ENCODE measurements at regions of chr2 and their contacts with region 1.

Region 1: DNA sequence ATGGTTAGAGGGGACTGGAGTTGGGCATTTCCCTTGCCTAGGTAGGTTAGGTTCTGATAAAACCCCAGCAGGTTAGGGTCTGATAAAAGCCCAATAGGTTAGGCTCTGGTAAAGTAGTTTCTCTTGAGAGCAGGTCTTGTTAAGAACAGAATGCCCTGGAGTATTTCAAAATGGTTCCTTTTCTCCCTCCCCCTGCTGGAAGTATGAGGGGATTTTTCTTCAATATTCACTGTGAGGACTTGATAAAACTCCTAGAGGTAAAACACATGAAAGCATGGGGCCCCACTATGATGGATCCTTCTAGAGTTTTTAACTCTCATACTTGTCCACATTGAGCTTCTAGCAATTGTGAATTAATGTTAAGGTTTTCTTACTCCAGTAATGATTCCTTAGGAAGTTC is 27.6 kb downstream of the ANKAR start:
- DNase-seq: no peak
- ATAC-seq: no peak
- H3K4me3 ChIP-seq: no peak overlapping the region
- H3K27ac ChIP-seq: no peak overlapping the region
- H3K4me1 ChIP-seq: no peaks in the 10 kb centered on the region
- H3K27me3 ChIP-seq: no peaks in the 10 kb centered on the region
- CTCF ChIP-seq: no peak

Region 2: DNA sequence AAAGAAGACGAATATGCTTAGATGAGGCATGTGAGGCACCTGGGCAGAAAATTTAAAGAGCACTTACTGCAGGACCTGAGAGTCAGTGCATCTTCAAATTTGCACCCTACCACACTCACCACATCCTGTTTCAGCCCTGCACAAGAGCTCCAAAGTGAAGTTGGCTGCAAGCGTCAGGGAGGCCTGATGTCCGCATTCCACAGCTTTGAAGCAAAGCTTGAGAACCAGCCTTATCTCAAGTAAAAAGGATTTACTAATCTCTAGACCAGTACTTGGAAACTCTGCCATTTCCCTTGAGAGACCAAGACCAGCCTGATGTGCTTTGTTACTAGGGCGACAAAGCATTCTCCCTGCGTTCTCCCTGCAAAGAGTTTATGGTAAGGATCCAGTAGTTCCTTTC is 44.2 kb before region 1 on chr2:
- intact Hi-C with region 1: loop called (anchors 5 kb)
- DNase-seq: peak; percentile 61
- ATAC-seq: peak; percentile 66
- H3K4me3 ChIP-seq: no peak overlapping the region
- H3K27ac ChIP-seq: peak overlapping the region; percentile 82
- H3K4me1 ChIP-seq: peaks cover 19% of the 10 kb centered on the region
- H3K27me3 ChIP-seq: no peaks in the 10 kb centered on the region
- CTCF ChIP-seq: no peak

Region 3: DNA sequence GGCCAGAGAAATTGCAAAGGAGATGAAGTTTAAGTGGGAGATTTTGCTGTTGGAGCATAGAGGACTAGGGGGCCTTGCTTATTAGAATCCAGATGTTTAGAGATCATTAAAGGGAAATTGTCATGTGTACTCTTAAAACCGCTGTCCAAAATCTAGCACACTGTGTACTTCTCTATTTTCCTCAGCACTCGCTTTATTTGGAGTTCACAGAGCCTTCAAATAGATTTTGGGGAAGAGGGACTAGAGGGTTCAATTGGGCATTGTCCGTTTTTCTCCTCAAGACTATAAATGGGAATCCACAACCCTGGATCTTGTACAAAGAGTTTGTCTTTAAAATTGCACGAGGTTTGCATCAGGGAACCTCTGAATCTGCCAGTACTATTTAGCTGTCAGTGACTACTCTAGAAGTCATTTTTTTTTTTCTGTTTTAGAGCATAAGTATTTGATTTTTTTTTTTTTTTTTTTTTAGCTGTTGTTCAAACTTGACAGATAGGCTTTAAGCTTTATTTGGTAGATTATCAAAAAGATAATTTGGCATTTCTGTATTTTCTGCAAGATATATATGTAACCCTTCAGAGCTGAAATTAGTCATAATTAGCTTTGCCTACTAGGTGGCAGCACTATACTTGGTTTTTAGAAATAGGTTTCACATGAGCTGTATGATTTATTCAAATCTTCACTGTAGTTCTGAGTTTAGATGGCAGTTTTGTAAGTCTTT is 96.4 kb after region 1 on chr2:
- intact Hi-C with region 1: no loop called
- DNase-seq: no peak
- ATAC-seq: peak; percentile 61
- H3K4me3 ChIP-seq: no peak overlapping the region
- H3K27ac ChIP-seq: no peak overlapping the region
- H3K4me1 ChIP-seq: no peaks in the 10 kb centered on the region
- H3K27me3 ChIP-seq: no peaks in the 10 kb centered on the region
- CTCF ChIP-seq: peak; percentile 36